MCF 10A (cell line): ENCODE measurements at regions of chr4 and their contacts with region 1.

Region 1: DNA sequence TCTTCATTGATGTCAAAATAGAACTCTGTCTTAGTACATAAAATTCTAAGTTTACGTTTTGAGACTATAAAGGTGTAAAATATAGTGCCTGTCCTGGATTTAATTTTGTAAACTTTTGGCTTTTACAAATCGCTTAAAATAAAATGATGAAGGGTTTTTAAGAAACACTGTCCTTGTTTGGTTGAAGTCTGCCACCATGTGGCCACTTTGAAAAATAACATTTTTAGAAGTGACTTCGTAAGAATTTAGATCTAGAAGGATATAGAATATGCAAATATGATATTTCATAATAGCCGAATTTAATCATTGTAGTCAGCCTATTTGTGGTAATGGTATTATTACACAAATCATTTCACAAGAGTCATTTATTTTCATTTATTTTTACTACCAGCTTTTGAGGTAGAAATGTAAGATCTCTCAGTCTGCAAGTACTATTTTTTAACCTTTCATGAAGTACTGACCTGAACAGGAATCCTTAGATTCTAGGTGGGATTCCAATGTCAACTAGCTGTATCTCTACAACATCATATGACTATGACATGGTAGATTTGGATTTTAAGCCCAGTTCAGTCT is 31.0 kb upstream of the FAT4 start:
- DNase-seq: peak; percentile 57
- H3K4me3 Mint-ChIP-seq: no peak overlapping the region
- H3K27ac Mint-ChIP-seq: no peak overlapping the region
- H3K4me1 Mint-ChIP-seq: peaks cover 5% of the 10 kb centered on the region
- H3K27me3 Mint-ChIP-seq: no peaks in the 10 kb centered on the region
- CTCF ChIP-seq: peak; percentile 60

Region 2: GRCh38 chr4:124334119-124334518 is 949.7 kb before region 1 on chr4:
- CTCF ChIA-PET with region 1: interaction called, 49 read pairs
- POLR2A ChIA-PET with region 1: interaction called, 3 read pairs
- intact Hi-C with region 1: loop called (anchors 1 kb)
- DNase-seq: peak; percentile 81
- H3K4me3 Mint-ChIP-seq: peak overlapping the region; percentile 23
- H3K27ac Mint-ChIP-seq: no peak overlapping the region
- H3K4me1 Mint-ChIP-seq: peaks cover 5% of the 10 kb centered on the region
- H3K27me3 Mint-ChIP-seq: no peaks in the 10 kb centered on the region
- CTCF ChIP-seq: peak; percentile 64

Region 3: GRCh38 chr4:125039550-125039949 is 244.2 kb before region 1 on chr4:
- CTCF ChIA-PET with region 1: no interaction called
- POLR2A ChIA-PET with region 1: no interaction called
- intact Hi-C with region 1: no loop called
- DNase-seq: no peak
- H3K4me3 Mint-ChIP-seq: no peak overlapping the region
- H3K27ac Mint-ChIP-seq: no peak overlapping the region
- H3K4me1 Mint-ChIP-seq: peaks cover 19% of the 10 kb centered on the region
- H3K27me3 Mint-ChIP-seq: no peaks in the 10 kb centered on the region
- CTCF ChIP-seq: no peak

Region 4: DNA sequence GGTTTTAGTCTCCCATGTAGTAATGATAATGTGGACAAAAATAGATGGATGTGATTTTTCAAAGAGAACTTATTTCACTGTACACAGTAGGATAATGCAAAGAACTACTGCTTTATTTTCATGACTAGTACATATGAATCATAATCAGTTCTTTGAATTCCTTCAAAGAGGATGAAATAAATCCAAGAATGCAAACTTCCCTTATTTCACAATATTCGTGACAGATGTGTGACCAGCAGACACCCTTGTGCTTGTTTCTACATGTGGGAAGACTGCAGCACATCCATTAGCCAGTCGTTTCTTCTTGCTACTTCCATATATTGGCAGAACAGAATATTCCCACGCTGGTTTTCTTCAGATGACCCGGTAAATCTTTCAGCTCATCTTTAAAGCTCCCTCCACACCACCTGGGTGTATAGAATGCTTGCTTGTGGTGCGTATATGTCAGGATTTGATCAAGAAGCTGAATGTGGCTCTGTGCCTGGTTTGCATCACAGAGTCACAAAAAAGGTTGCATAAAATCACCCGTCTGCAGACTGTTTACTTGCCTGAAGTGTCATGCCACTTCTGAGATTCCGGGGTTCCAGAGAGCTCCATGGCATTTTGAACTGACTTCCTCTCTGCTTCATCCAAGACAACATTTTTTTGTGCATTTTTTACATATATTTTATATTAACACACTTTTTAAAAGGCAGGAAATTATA is 16.7 kb before region 1 on chr4:
- CTCF ChIA-PET with region 1: interaction called, 6 read pairs
- POLR2A ChIA-PET with region 1: interaction called, 11 read pairs
- intact Hi-C with region 1: no loop called
- DNase-seq: peak; percentile 89
- H3K4me3 Mint-ChIP-seq: peak overlapping the region; percentile 63
- H3K27ac Mint-ChIP-seq: peak overlapping the region; percentile 57
- H3K4me1 Mint-ChIP-seq: peaks cover 13% of the 10 kb centered on the region
- H3K27me3 Mint-ChIP-seq: no peaks in the 10 kb centered on the region
- CTCF ChIP-seq: no peak